Natural killer cell (primary cell): ENCODE measurements at regions of chr1 and their contacts with region 1.

Region 1: GRCh38 chr1:91768787-91769725 is 116.9 kb downstream of the TGFBR3 start:
- DNase-seq: no peak
- ATAC-seq: peak; percentile 23 to 59 (median 46)
- H3K4me3 ChIP-seq: no peak overlapping the region
- H3K4me3 Mint-ChIP-seq: peak overlapping the region; percentile 59
- H3K27ac ChIP-seq: no peak overlapping the region
- H3K27ac Mint-ChIP-seq: peak overlapping the region; percentile 88 to 89
- H3K4me1 ChIP-seq: peaks cover 21% of the 10 kb centered on the region
- H3K4me1 Mint-ChIP-seq: peaks cover 69 to 81% of the 10 kb centered on the region in 2 donors
- H3K27me3 ChIP-seq: no peaks in the 10 kb centered on the region
- H3K27me3 Mint-ChIP-seq: no peaks in the 10 kb centered on the region
- CTCF ChIP-seq: no peak

Region 2: DNA sequence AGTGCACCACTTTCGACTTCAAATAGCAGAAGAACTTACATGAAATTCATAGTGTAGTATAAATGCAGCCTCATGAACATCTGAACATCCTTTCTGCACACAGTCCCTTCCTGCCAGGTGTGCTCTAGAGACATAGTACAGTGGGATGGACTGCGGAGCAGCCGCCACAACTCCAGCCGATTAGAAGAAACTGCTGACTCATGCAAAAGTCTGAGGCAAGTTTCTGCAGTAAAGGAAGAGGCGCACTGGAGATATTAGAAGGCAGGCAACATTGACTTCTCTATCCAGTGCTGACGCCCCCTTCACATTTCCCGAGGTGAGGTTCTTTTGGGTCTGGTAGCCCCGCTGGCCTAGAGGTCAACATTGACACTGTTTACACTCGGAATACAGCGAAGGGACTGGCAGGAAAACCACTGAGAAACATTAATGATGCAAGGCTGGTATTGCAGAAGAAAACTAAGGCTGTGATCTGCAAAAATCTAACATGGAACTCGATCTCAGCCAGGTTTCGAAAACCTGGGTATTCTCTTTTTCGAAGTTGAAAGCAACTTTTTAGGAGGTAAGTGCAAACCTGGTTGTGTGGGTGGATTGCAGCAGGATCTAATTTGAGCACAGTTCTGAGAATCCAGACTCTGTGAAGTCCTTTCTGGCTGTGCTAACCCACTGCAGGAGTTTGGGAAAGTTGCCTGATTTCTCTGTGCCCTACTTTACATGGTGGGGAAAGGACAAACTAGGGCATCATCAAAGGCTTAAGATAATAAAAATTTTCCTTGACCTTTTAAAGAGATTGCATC is 177.7 kb before region 1 on chr1:
- intact Hi-C with region 1: no loop called
- DNase-seq: peak in 1 of 2 donors; percentile 9
- ATAC-seq: peak in 2 of 3 donors; percentile 20 to 55
- H3K4me3 ChIP-seq: no peak overlapping the region
- H3K4me3 Mint-ChIP-seq: peak overlapping the region; percentile 64
- H3K27ac ChIP-seq: no peak overlapping the region
- H3K27ac Mint-ChIP-seq: peak overlapping the region in 1 of 2 donors; percentile 60
- H3K4me1 ChIP-seq: peaks cover 16% of the 10 kb centered on the region
- H3K4me1 Mint-ChIP-seq: peaks cover 28 to 39% of the 10 kb centered on the region in 2 donors
- H3K27me3 ChIP-seq: no peaks in the 10 kb centered on the region
- H3K27me3 Mint-ChIP-seq: no peaks in the 10 kb centered on the region
- CTCF ChIP-seq: no peak

Region 3: GRCh38 chr1:91725989-91726721 is 42.9 kb before region 1 on chr1:
- intact Hi-C with region 1: loop called (anchors 5 kb)
- DNase-seq: no peak
- ATAC-seq: no peak
- H3K4me3 ChIP-seq: no peak overlapping the region
- H3K4me3 Mint-ChIP-seq: peak overlapping the region; percentile 15
- H3K27ac ChIP-seq: no peak overlapping the region
- H3K27ac Mint-ChIP-seq: peak overlapping the region; percentile 59 to 90
- H3K4me1 ChIP-seq: peaks cover 28% of the 10 kb centered on the region
- H3K4me1 Mint-ChIP-seq: peaks cover 72 to 76% of the 10 kb centered on the region in 2 donors
- H3K27me3 ChIP-seq: no peaks in the 10 kb centered on the region
- H3K27me3 Mint-ChIP-seq: no peaks in the 10 kb centered on the region
- CTCF ChIP-seq: no peak

Region 4: GRCh38 chr1:91781371-91781825 is 12.3 kb after region 1 on chr1:
- intact Hi-C with region 1: no loop called
- DNase-seq: no peak
- ATAC-seq: no peak
- H3K4me3 ChIP-seq: no peak overlapping the region
- H3K4me3 Mint-ChIP-seq: no peak overlapping the region
- H3K27ac ChIP-seq: no peak overlapping the region
- H3K27ac Mint-ChIP-seq: peak overlapping the region; percentile 67 to 79
- H3K4me1 ChIP-seq: peaks cover 15% of the 10 kb centered on the region
- H3K4me1 Mint-ChIP-seq: peaks cover 81 to 85% of the 10 kb centered on the region in 2 donors
- H3K27me3 ChIP-seq: no peaks in the 10 kb centered on the region
- H3K27me3 Mint-ChIP-seq: no peaks in the 10 kb centered on the region
- CTCF ChIP-seq: no peak